ENCODE measurements at regions of chr17 and their contacts with region 1.

Region 1: DNA sequence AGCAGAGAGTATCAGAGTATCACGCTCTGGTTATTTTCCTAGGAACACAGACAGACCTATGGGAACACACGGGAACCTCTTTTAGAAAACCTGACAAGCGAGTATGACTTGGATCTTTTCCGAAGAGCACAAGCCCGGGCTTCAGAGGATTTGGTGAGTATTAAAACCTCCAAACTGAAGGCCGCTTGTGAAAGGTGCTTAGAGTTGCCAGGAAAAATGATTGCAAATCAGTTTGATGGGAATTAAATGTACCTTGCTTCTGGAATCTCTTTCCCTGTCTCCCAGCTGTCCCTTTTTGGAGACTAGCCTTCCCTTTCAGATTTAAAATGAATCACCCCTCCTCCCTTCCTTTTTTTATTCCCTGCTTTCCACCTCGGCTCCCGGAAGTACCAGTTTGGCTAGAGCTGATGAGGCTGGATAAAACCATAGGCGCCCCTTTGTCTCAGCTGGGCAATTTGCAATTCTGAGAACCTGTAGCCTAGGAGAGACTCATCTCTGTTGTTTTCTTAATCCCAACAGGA is 27.3 kb downstream of the KAT7 start:
- DNase-seq: no peak
- H3K4me3 ChIP-seq: no peak overlapping the region
- H3K27ac ChIP-seq: peak overlapping the region; percentile 35 to 41
- H3K4me1 ChIP-seq: peaks cover 0 to 7% of the 10 kb centered on the region in 2 donors
- H3K27me3 ChIP-seq: no peaks in the 10 kb centered on the region
- CTCF ChIP-seq: no peak

Region 2: DNA sequence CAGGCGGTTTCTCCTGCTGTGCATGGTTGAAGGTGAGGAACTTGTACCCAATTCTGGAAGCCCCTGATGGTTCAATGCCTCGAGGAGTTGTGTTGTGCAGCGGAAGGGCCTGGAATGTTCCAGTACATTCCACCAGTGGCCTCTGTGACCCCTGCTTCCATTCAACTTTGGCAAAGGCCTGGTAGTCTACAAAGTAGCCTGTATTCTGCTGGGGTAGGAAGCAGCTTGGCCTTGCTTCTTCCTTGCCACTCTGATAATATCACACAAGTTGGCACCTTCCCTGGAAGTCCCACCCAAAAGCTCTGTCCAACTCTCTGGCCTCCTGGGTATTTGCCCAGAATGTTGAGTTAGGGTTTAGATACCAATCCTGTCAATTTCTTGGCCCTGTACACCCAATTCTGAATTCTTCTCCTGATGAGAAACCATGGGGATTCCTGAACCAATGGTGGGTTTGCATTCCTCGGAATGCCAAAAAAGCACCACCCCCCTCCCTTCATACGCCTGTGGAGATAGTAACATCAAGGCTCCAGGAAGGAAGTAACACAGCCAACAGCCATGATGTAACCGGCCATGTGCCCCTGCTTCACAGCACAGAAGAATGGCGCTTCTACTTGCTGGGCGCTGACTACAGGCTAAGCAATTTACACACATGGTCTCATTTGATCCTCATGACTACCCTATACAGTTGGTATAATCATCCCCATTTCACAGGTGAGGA is 40.1 kb before region 1 on chr17:
- intact Hi-C with region 1: no loop called
- DNase-seq: no peak
- H3K4me3 ChIP-seq: no peak overlapping the region
- H3K27ac ChIP-seq: peak overlapping the region; percentile 89
- H3K4me1 ChIP-seq: peaks cover 18 to 48% of the 10 kb centered on the region in 2 donors
- H3K27me3 ChIP-seq: no peaks in the 10 kb centered on the region
- CTCF ChIP-seq: no peak

Region 3: DNA sequence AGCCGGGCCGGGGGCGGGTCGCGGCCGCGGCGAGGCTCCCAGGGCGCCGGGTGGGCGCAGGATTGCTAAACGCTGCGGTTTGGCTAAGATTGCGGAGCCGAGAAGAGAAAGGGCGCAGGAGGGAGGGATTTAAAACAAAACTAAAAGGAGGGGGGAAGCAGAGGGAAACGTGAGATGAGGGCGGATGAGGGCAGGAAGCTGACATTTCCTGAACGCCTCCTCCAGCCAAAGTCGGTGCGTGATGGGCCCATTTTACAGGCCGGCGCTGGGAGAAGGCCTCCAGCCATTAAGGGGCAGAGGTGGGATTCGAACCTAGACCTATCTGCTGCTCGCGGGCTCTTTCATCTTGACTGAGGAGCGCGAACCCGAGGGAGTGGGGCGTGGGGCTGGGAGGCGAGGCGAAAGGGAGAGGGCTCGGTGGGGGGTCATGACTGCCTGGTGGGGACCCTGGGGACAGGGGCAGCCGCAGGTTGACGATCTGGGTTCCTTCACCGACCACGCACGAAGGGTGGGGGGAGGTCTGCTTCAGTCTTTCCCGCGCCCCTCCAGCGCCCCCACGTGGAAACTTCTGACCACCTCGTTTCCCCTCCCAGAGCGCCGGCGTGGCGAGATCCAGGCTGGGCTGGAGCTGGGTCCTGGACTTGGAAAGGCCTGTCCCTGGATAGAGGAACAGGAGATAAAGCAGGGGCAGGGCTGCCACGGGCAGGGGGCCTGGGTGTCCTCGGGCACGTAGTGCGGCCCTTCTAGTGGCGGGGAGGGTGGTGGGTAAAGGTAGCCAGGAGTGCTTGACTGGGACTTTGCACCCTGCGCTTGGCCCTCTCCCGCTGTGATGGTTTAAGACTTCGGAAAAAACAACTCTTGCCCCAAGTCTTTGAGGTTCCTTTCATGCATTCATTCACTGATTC is 35.8 kb after region 1 on chr17:
- intact Hi-C with region 1: loop called (anchors 2 kb)
- DNase-seq: peak in 1 of 2 donors; percentile 85
- H3K4me3 ChIP-seq: peak overlapping the region; percentile 74 to 77
- H3K27ac ChIP-seq: peak overlapping the region; percentile 29 to 37
- H3K4me1 ChIP-seq: peaks cover 0 to 6% of the 10 kb centered on the region in 2 donors
- H3K27me3 ChIP-seq: no peaks in the 10 kb centered on the region
- CTCF ChIP-seq: peak; percentile 68 to 93 (median 88)